Caco-2 (cell line): ENCODE measurements at regions of chr11 and their contacts with region 1.

Region 1: DNA sequence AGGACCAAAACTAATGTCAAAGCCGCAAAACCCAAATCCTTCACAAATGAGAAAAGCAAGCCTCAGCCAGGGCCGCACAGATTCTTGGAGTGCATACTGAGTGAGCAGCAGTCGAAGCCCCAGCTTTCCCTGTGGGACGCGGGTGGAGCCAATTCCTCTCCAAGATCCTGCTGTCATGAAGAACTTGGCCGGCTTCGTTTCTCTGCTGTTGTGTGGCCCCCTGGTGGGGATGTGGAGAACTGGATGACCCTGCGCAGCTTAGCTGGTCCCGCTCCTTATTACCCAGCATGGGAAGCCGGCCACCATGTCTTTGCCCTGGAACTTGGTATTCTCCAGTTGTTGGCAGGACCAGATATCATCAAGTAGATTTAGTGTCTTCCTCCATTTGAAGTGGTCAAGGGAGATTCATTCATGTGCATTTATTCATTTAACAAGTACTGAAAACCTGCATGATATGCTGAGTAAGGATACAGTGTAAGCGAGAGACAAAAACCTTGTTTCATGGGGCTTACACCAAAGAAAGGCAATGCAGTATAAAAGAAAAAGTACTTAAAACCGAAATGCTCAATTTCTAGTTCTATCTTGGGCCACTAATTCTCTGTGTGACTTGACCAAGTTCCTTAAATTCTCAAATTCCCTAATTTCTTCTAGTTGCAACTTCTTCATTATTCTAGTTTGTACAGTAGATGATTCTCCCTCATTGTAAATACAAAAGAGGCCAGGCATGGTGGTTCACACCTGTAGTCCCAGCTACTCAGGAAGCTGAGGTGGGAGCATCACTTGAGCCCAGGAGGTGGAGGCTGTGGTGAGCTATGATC is 56.7 kb upstream of the CRTAM start:
- DNase-seq: peak; percentile 89 to 94
- H3K4me3 ChIP-seq: no peak overlapping the region
- H3K4me3 Mint-ChIP-seq: no peak overlapping the region
- H3K27ac Mint-ChIP-seq: no peak overlapping the region
- H3K4me1 ChIP-seq: peaks cover 19% of the 10 kb centered on the region
- H3K4me1 Mint-ChIP-seq: peaks cover 27% of the 10 kb centered on the region
- H3K27me3 ChIP-seq: no peaks in the 10 kb centered on the region
- H3K27me3 Mint-ChIP-seq: no peaks in the 10 kb centered on the region
- CTCF ChIP-seq: peak; percentile 99

Region 2: DNA sequence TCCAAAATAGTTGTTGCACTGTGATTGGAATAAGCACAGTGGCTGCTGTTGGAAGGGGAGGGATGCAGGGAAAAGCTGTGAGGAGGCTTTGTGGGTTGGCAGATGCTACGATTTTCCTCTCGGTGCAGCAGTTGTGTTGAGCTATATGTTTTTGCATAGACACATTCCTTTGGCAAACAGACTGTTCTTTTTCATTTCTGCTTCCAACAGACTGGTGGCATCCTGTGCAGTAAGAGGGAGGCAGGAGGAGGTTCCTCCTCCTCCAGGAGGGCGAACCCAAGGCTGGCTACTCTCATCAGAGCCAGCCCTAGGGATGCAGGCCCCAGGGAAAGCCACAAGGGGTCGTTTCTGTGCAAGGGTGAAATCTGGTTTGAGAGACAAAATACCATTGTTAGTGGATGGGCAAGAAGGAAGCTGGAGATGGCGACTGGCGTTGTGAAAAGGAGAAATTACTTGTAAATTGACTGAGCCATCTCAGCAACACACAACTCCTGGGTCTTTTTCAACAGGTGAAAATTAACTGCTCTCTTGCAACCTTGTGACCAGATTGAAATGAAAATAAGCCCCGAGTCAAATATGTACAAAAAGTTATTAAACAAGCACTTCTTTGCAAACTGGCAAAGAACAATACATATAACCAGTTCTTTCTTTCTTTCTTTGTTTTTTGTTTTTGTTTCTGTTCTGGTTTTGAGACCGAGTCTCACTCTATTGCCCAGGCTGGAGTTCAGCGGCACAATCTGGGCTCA is 152.6 kb before region 1 on chr11:
- CTCF ChIA-PET with region 1: interaction called, 44 read pairs
- POLR2A ChIA-PET with region 1: no interaction called
- intact Hi-C with region 1: loop called (anchors 1 kb)
- DNase-seq: peak; percentile 82 to 86
- H3K4me3 ChIP-seq: no peak overlapping the region
- H3K4me3 Mint-ChIP-seq: no peak overlapping the region
- H3K27ac Mint-ChIP-seq: no peak overlapping the region
- H3K4me1 ChIP-seq: no peaks in the 10 kb centered on the region
- H3K4me1 Mint-ChIP-seq: peaks cover 7% of the 10 kb centered on the region
- H3K27me3 ChIP-seq: no peaks in the 10 kb centered on the region
- H3K27me3 Mint-ChIP-seq: peaks cover under 1% of the 10 kb centered on the region
- CTCF ChIP-seq: peak; percentile 92 to 98

Region 3: DNA sequence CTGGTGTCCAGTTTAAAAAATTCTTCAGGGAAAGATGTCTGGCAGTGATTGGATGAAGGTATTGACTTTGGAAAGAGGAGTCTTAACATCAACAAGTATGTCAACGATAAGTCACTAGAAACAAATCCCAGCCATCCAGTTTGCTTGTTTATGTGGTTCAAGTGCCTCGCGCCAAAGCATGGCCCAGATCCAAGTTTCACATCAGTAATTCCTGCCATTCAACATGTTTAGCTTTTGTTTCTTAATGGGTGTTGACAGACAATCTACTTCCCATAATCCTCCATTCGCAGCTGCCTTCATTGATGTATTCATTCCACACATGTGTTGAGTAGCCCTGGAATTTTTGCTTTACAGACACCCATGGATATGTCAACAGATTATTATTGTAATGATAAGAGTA is 48.3 kb before region 1 on chr11:
- CTCF ChIA-PET with region 1: no interaction called
- POLR2A ChIA-PET with region 1: no interaction called
- intact Hi-C with region 1: loop called (anchors 2 kb)
- DNase-seq: no peak
- H3K4me3 ChIP-seq: no peak overlapping the region
- H3K4me3 Mint-ChIP-seq: no peak overlapping the region
- H3K27ac Mint-ChIP-seq: peak overlapping the region; percentile 60
- H3K4me1 ChIP-seq: peaks cover 46% of the 10 kb centered on the region
- H3K4me1 Mint-ChIP-seq: peaks cover 36% of the 10 kb centered on the region
- H3K27me3 ChIP-seq: no peaks in the 10 kb centered on the region
- H3K27me3 Mint-ChIP-seq: no peaks in the 10 kb centered on the region
- CTCF ChIP-seq: no peak

Region 4: DNA sequence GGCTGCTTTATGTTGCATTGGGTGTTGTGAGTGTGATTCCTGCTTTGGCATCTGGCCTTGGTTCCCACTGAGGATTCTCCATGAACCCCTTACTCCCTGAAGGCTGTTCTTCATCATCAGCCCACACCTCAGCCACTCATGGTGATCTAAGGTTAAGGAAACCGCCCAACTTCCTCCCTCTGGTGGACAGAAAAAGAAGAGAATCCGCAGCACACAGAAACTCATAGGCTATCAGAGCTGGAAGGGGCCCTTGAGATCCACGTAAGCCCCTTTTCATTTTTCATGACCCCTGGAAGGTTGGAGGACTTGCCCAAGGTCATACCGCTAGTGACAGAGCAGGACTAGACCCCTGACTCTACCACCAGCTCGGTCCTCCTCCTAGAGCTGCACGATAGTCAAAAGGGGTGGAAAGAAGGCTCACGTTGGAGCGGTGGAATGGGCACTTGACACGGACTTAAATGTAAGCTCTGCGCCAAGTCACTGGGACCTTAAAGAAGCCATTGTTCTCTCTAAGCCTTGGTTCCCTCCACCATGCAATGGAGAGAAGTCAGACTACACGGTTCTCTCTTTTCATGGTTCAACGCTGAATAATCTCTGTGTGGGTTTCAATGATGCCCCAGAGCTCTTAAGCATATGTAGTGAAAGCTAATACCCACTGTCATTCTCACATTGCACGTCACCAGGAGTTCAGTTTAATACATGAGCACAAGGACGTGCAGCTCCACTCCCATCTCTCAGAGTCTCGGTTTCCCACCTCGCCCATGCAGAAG is 26.8 kb before region 1 on chr11:
- CTCF ChIA-PET with region 1: interaction called, 8 read pairs
- POLR2A ChIA-PET with region 1: no interaction called
- intact Hi-C with region 1: loop called (anchors 1 kb)
- DNase-seq: peak in 1 of 2 experiments; percentile 65
- H3K4me3 ChIP-seq: no peak overlapping the region
- H3K4me3 Mint-ChIP-seq: no peak overlapping the region
- H3K27ac Mint-ChIP-seq: no peak overlapping the region
- H3K4me1 ChIP-seq: no peaks in the 10 kb centered on the region
- H3K4me1 Mint-ChIP-seq: no peaks in the 10 kb centered on the region
- H3K27me3 ChIP-seq: no peaks in the 10 kb centered on the region
- H3K27me3 Mint-ChIP-seq: no peaks in the 10 kb centered on the region
- CTCF ChIP-seq: peak; percentile 72 to 86

Region 5: DNA sequence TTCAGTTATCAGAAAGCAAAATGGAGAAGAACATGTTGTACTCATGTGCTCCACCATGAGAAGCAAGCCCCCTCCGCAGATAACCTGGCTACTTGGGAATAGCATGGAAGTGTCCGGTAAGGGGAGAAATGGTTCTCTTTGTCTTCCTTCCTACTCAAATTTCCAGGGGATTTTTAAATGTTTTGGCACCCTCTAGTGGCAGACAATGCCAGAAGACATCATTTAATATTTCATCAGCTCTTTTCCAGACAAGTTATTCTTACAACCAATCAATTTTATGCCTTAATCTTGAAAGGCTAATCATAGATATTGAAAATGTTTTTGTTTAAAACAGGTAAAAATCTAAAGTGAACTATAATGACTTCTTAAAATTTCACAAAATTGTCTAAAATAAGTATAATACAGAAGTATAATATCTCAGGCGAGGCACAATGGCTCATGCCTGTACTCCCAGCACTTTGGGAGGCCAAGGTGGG is 72.4 kb after region 1 on chr11:
- CTCF ChIA-PET with region 1: interaction called, 9 read pairs
- POLR2A ChIA-PET with region 1: no interaction called
- intact Hi-C with region 1: loop called (anchors 1 kb)
- DNase-seq: peak; percentile 69 to 83
- H3K4me3 ChIP-seq: no peak overlapping the region
- H3K4me3 Mint-ChIP-seq: no peak overlapping the region
- H3K27ac Mint-ChIP-seq: no peak overlapping the region
- H3K4me1 ChIP-seq: peaks cover 13% of the 10 kb centered on the region
- H3K4me1 Mint-ChIP-seq: peaks cover 13% of the 10 kb centered on the region
- H3K27me3 ChIP-seq: no peaks in the 10 kb centered on the region; the same call in 1 of the 2 replicates
- H3K27me3 Mint-ChIP-seq: peaks cover 3% of the 10 kb centered on the region
- CTCF ChIP-seq: peak; percentile 79 to 80